ENCODE measurements at regions of chr21 and their contacts with region 1.

Region 1: DNA sequence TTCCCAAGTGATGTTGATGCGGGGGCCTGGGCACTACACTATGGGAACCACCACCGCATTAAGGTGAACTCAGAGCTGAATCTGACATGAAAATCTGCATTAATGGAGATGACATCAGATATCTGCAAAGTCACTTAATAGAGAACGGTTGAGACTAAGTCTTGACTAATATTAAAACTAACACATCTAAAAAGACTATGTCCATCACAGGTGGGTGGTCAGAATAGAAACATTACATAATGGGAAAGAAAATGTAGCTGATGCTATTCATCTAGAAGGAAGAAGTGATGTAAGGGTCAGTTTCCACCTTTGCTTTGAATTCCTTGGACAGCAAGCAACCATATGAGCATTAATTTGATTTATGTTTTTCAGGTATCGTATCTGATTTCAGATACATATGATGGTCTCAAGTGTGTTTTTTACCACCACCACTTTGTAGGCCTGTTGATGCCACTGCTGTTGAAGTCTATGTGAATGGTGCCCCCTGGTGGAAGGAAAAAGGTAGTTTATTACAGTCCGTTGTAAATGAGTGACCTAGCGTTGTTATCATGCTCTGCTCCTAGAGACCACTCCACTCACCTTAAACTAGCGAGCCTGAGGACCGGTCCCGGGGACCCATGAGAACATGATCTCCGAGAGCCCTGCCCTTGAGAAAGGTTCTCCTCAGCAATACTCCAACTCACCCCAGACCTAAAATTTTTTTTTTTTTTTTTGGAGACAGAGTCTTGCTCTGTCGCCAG is 73.5 kb downstream of the BACH1 start:
- DNase-seq: peak; percentile 79 to 90 (median 86)
- H3K4me3 ChIP-seq: no peak overlapping the region
- H3K27ac ChIP-seq: no peak overlapping the region
- H3K4me1 ChIP-seq: peaks cover 0 to 8% (median 4%) of the 10 kb centered on the region in 4 experiments
- H3K27me3 ChIP-seq: no peaks in the 10 kb centered on the region

Region 2: DNA sequence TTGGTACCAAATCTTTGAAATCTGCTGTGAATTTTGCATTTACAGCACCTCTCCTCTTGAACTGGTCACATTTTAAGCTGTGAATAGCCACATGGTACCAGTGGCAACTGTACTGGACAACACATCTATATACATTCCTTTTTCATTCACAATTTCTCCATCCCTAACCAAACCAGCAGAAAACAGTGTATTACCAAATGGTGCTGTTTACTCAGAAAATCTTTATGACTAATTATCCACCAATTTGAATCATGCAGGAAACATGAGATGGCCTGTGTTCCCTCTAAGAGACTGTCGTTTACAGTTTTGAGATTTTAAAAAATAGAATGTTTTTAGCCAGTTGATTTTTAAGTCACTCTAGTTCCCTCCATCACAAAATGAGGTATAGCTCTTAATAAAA is 281.2 kb before region 1 on chr21:
- CTCF ChIA-PET with region 1: interaction called, 104 read pairs
- POLR2A ChIA-PET with region 1: no interaction called
- DNase-seq: no peak
- H3K4me3 ChIP-seq: no peak overlapping the region
- H3K27ac ChIP-seq: no peak overlapping the region
- H3K4me1 ChIP-seq: peaks cover 0 to 7% (median 0%) of the 10 kb centered on the region in 4 experiments
- H3K27me3 ChIP-seq: no peaks in the 10 kb centered on the region

Region 3: GRCh38 chr21:29164325-29164942 is 207.8 kb before region 1 on chr21:
- CTCF ChIA-PET with region 1: interaction called, 38 read pairs
- POLR2A ChIA-PET with region 1: no interaction called
- DNase-seq: peak; percentile 50 to 78 (median 75)
- H3K4me3 ChIP-seq: no peak overlapping the region
- H3K27ac ChIP-seq: no peak overlapping the region
- H3K4me1 ChIP-seq: no peaks in the 10 kb centered on the region
- H3K27me3 ChIP-seq: no peaks in the 10 kb centered on the region

Region 4: DNA sequence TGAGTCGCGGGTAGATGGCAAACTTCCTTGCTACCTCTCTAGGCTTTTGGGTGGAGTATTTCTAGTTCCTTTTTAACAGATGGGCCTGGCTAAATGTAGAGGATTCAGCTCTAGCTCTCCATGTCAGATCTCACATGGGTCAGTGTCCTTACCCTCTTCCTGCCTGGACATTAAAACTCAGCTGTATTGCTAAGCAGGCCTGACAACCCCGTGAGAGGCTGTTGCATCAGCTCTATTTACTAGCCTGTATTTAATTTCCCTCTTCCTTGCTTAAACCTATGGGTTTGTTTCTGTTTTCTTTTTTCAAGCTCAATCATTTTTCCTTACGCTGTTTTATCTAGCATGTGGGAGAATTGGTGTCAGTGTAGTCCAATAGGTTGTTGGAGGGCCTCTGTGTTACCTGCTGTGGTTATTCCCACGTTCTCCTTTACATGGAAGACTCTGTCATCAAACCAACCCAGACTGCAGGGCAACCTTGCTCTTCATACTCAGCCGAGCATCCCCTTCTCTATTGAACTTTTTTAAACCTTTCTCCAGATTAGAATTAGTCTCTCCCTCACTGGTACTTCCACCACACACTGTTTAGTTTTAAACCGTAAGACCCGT is 153.0 kb before region 1 on chr21:
- CTCF ChIA-PET with region 1: no interaction called
- POLR2A ChIA-PET with region 1: no interaction called
- DNase-seq: no peak
- H3K4me3 ChIP-seq: no peak overlapping the region
- H3K27ac ChIP-seq: no peak overlapping the region
- H3K4me1 ChIP-seq: no peaks in the 10 kb centered on the region
- H3K27me3 ChIP-seq: no peaks in the 10 kb centered on the region

Region 5: DNA sequence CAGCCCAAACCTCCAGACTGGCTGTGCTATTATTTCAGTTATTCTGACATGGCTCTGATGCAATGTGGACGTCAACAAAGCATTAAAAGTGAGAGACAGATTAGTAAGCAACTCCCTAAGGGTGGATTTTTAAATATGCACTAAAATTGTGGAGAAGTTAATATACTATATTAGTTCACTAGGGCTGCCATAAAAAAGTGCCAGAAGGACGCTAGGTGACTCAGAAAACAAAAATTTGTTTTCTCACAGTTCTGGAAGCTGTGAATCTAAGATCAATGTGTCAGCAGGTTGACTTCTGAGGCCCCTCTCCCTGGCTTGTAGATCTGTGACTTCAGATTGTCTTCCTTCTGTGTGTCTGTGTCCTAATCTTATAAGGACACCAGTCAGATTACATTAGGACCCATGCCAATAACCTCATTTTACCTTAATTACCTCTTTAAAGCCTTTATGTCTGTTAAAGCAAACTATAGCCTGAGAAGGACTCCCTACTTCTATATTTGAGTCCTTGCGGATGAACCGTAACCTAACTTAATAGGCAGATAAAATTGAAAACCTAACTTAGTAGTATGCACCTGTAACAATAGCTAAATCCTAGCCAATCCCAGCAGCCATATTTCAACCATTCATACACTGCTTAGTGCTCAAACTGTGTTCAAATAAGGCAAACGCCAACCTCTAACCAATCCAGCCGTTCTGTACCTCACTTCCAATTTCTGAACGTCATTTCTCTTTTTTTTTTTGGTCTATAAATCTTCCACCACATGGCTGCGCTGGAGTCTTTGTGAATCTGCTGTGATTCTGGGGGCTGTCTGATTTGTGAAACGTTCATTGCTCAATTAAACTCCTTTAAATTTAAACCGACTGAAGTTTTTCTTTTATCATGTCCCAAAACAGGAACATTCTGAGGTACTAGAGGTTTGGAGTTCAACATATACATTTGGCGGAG is 139.4 kb before region 1 on chr21:
- CTCF ChIA-PET with region 1: interaction called, 10 read pairs
- POLR2A ChIA-PET with region 1: no interaction called
- DNase-seq: peak; percentile 38 to 82 (median 76)
- H3K4me3 ChIP-seq: no peak overlapping the region
- H3K27ac ChIP-seq: no peak overlapping the region
- H3K4me1 ChIP-seq: peaks cover 25 to 43% (median 39%) of the 10 kb centered on the region in 4 experiments
- H3K27me3 ChIP-seq: no peaks in the 10 kb centered on the region

Region 6: GRCh38 chr21:29360799-29361765 is 11.2 kb before region 1 on chr21:
- CTCF ChIA-PET with region 1: interaction called, 33 read pairs
- POLR2A ChIA-PET with region 1: no interaction called
- DNase-seq: peak; percentile 12 to 29 (median 21)
- H3K4me3 ChIP-seq: no peak overlapping the region
- H3K27ac ChIP-seq: no peak overlapping the region
- H3K4me1 ChIP-seq: no peaks in the 10 kb centered on the region
- H3K27me3 ChIP-seq: no peaks in the 10 kb centered on the region

Measured in common myeloid progenitor, CD34-positive (primary cell).